B cell (primary cell): ENCODE measurements at regions of chr7 and their contacts with region 1.

Region 1: DNA sequence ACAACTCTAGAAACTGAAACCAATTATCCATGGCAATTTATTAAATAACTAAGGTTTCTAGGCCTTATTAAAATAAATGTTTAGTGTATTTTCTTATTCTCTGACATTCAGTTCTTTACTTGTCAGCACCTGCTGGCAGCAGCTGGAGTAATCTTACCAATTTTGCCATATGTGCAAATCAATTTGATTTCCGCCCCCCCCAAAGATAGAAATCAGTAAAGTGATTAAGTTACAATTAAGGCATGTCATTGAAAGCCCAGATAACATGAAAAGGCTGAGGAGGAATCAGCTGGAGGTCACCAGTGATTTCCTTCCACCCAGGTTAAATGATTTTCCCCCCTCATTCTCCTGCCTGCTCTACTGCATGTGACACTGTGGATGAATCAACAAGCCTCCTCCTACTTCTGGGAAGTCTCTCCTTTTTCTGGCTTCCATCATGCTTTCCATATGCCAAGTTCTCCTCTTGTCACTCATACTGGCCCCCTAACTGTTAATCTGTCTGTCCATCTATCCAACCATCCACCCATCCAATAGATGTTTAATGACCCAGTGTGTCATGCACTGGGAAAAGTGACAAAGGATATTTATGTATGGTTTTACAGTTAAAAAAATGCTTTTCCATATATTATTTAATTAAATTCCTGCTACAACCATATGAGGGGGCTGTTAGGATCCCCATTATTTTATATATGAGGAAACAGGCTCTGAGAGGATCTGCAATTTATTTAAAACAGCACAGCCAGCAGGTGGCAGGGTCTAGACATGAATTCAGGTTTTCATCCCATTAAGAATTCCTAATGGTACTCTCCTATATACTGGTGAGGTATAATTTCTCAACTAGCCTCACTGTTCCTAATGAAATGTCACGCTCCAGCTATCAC is 116.5 kb downstream of the ATXN7L1 start:
- DNase-seq: peak; percentile 44
- ATAC-seq: no peak
- H3K4me3 ChIP-seq: no peak overlapping the region
- H3K4me3 Mint-ChIP-seq: no peak overlapping the region
- H3K27ac ChIP-seq: no peak overlapping the region
- H3K27ac Mint-ChIP-seq: no peak overlapping the region
- H3K4me1 ChIP-seq: no peaks in the 10 kb centered on the region
- H3K4me1 Mint-ChIP-seq: no peaks in the 10 kb centered on the region
- H3K27me3 ChIP-seq: no peaks in the 10 kb centered on the region
- H3K27me3 Mint-ChIP-seq: no peaks in the 10 kb centered on the region
- CTCF ChIP-seq: peak; percentile 55

Region 2: DNA sequence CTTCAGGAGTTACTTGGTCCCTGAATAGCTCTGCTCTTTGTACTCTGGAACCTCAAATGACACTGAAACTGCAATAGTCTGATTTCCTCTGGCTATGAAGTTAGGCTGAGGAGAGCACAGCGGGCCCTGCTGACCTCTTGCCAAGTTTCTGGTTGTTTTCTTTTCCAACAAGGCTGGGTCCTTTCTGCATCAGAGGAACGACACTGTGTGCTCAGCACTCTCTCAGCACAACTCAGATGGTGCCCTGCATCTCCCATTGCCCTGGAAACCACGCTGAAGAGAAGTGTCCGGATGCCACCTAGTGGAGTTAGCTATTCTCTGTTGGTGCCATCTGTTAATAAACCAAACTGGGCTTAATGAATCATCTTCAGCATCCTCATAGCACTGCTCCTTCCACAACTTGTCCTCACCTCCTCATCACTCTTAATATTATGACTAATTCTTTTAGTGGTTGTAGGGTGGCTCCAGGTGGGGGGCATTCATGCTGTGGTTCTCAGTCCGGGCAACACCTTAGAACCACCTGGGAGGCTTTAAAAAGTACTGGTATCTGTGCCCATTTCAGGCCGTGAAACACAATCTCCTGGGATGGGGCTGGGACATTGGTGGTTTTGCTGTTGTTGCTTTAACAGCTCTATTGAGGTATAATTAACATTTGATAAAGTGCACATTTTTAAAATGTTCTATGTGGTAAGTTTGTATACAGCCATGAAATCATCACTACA is 170.4 kb before region 1 on chr7:
- CTCF ChIA-PET with region 1: no interaction called
- POLR2A ChIA-PET with region 1: no interaction called
- intact Hi-C with region 1: no loop called
- DNase-seq: peak; percentile 66
- ATAC-seq: peak; percentile 90
- H3K4me3 ChIP-seq: no peak overlapping the region
- H3K4me3 Mint-ChIP-seq: no peak overlapping the region
- H3K27ac ChIP-seq: no peak overlapping the region
- H3K27ac Mint-ChIP-seq: peak overlapping the region; percentile 39
- H3K4me1 ChIP-seq: peaks cover 9 to 16% of the 10 kb centered on the region in 2 donors
- H3K4me1 Mint-ChIP-seq: peaks cover 30% of the 10 kb centered on the region
- H3K27me3 ChIP-seq: no peaks in the 10 kb centered on the region
- H3K27me3 Mint-ChIP-seq: no peaks in the 10 kb centered on the region
- CTCF ChIP-seq: peak; percentile 65

Region 3: DNA sequence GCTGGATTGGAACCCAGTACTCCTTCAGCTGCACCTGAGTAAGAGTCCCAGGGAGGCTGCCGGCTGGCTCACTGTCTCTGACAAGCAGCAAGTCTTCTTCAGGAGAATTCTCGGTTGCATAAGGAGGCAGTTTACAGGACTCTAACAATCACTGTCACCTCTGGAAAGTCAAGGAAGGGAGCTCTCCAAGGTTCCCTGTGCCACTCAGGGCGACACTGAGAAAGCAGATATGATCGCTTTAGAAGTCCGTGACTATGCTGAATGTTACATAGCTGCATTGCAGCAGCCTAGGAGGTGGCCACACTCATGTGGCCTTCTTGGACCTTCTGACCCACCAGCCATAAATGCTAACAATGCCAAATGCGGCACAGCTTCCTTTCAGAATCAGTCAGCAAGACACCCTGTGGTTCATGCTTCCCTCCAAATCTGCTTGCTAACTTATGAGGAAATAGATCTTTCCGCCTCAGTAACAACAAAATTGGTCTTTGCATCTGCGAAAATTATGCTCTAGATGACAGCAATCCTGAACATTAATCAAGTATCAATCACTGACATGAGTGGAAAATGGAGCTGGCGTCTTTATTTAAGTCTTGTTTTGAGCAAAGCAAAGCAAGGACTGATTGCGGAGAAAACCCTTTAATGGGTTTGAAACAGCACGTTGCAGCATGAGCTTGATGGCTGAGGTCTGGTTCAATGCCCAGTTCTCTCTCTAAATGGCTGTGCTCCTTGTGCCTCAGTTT is 16.4 kb before region 1 on chr7:
- CTCF ChIA-PET with region 1: interaction called, 17 read pairs
- POLR2A ChIA-PET with region 1: no interaction called
- intact Hi-C with region 1: no loop called
- DNase-seq: peak; percentile 35
- ATAC-seq: peak; percentile 31
- H3K4me3 ChIP-seq: no peak overlapping the region
- H3K4me3 Mint-ChIP-seq: peak overlapping the region; percentile 53
- H3K27ac ChIP-seq: no peak overlapping the region
- H3K27ac Mint-ChIP-seq: no peak overlapping the region
- H3K4me1 ChIP-seq: peaks cover 14 to 15% of the 10 kb centered on the region in 2 donors
- H3K4me1 Mint-ChIP-seq: peaks cover 21% of the 10 kb centered on the region
- H3K27me3 ChIP-seq: no peaks in the 10 kb centered on the region
- H3K27me3 Mint-ChIP-seq: no peaks in the 10 kb centered on the region
- CTCF ChIP-seq: no peak

Region 4: GRCh38 chr7:105808703-105809590 is 49.0 kb after region 1 on chr7:
- CTCF ChIA-PET with region 1: interaction called, 15 read pairs
- POLR2A ChIA-PET with region 1: no interaction called
- intact Hi-C with region 1: no loop called
- DNase-seq: peak; percentile 83
- ATAC-seq: peak; percentile 97
- H3K4me3 ChIP-seq: no peak overlapping the region
- H3K4me3 Mint-ChIP-seq: peak overlapping the region; percentile 30
- H3K27ac ChIP-seq: peak overlapping the region; percentile 38 to 58
- H3K27ac Mint-ChIP-seq: peak overlapping the region; percentile 46
- H3K4me1 ChIP-seq: peaks cover 21 to 41% of the 10 kb centered on the region in 2 donors
- H3K4me1 Mint-ChIP-seq: peaks cover 41% of the 10 kb centered on the region
- H3K27me3 ChIP-seq: no peaks in the 10 kb centered on the region
- H3K27me3 Mint-ChIP-seq: no peaks in the 10 kb centered on the region
- CTCF ChIP-seq: no peak

Region 5: DNA sequence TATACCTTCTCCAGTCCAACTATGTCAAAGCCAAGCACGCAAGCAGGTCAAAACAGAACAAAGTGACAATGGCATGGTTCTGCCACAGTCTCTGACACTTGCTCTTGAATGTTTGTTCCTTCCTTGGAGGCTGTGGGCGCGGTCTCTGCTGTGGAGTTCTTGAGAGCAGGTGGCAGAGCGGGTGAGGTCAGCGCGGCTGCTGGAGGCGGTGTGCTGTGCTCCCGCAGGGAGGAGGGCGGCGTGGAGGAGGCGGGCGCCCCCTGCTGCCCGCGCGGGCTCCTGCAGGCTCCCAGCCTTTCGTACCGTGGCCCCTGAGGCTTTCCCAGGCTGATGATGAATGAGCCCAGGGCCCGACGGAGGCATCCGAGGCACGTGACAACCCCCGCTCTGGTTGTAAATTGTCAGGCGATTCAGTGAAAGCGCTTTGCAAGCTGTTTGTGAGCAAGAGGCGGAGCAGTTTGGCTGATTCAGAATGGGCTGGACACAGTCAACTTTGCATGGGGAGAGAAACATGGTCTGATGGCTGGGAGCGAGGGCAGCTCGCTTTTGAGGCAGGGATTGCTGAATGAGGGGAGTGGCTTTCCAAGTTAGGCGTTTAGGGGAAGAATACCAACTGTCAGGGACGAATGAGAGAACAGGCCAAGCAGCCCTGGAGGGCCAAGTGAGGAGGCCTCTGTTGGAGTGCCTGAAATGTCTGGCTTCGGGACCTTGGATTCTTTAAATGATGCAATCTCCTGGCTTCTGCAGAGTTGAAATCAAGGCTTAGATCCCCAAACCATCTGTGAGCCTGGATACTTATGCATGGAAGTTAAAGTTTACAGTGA is 249.7 kb after region 1 on chr7:
- CTCF ChIA-PET with region 1: interaction called, 38 read pairs
- POLR2A ChIA-PET with region 1: no interaction called
- intact Hi-C with region 1: loop called (anchors 1 kb)
- DNase-seq: peak; percentile 80
- ATAC-seq: peak; percentile 98
- H3K4me3 ChIP-seq: no peak overlapping the region
- H3K4me3 Mint-ChIP-seq: peak overlapping the region; percentile 46
- H3K27ac ChIP-seq: no peak overlapping the region
- H3K27ac Mint-ChIP-seq: peak overlapping the region; percentile 28
- H3K4me1 ChIP-seq: peaks cover 17 to 18% of the 10 kb centered on the region in 2 donors
- H3K4me1 Mint-ChIP-seq: peaks cover 18% of the 10 kb centered on the region
- H3K27me3 ChIP-seq: peaks cover 0 to 4% (median under 1%) of the 10 kb centered on the region in 4 experiments
- H3K27me3 Mint-ChIP-seq: peaks cover 4% of the 10 kb centered on the region
- CTCF ChIP-seq: peak; percentile 88

Region 6: DNA sequence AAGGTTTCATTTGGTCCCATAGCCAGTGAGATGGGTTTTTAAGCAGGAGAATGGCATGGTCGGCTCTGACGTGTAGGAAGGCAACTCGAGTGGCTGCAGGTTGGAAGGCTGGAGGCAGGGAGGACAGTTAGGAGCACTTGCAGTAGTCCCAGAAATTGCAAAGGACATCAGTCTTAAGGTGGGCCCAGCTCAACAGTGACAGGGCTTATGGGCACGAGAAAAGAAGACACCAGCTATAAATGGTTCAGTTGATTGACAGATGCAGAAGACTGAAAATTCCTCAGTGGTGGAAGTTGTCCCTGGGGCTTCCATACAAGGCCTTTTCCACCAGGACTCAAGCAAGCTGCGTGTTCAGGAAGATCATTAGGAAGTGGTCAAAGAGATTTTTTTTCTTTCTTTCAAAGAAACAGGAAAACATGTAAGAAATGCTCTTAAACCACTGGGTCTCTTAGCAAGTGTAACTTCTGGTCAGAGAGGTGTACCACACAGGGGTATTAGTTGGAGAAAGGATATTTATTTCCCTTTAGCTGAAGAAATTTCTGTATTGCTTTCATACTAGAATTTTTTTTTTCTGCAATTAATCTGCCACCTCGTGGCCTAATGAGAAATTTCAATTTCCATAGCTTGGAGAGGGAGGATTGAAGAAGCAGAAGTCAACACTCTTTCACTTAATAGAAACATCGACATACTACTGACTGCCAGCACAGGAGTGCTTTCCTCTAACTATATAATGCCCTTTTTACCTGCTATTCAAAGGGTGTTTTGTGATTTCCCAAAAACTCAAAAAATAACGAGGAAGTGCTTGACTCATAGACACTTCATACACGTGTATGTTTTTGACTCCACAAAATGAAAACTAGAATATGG is 702.3 kb after region 1 on chr7:
- CTCF ChIA-PET with region 1: interaction called, 3 read pairs
- POLR2A ChIA-PET with region 1: no interaction called
- intact Hi-C with region 1: loop called (anchors 10 kb)
- DNase-seq: peak; percentile 58
- ATAC-seq: peak; percentile 49
- H3K4me3 ChIP-seq: no peak overlapping the region
- H3K4me3 Mint-ChIP-seq: no peak overlapping the region
- H3K27ac ChIP-seq: no peak overlapping the region
- H3K27ac Mint-ChIP-seq: no peak overlapping the region
- H3K4me1 ChIP-seq: peaks cover 11 to 23% of the 10 kb centered on the region in 2 donors
- H3K4me1 Mint-ChIP-seq: peaks cover 15% of the 10 kb centered on the region
- H3K27me3 ChIP-seq: no peaks in the 10 kb centered on the region
- H3K27me3 Mint-ChIP-seq: no peaks in the 10 kb centered on the region
- CTCF ChIP-seq: peak; percentile 70